SK-N-SH (cell line): ENCODE measurements at regions of chr5 and their contacts with region 1.

Region 1: DNA sequence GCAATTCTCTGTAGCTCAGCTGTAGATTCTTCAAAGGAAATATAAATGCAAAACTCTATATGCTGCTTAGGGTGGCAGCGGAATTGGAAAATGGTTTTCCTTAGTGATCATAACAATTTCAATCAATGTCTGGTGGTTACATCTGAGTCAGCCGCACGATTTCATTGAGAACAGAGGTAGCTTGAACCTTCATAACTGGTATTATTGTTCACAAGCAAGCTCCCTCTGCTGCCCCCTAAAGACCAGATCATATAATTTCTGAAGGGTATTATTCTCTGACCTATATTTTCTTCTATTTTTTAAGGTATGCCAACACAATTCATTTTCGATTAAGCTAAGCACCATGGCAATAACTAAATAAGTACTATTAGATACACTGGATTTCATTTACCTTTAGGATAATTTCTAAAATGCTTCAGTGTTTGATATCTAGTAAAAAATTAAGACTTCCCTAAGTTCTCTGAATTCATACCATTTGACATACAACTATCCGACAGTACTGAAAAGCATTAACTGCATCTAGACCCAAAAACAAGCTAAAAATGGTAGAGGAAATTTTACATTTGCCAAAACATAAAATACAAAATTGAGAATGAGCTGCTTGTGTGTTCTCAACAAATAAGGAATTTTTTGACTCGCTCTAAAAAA is 181.1 kb upstream of the SPEF2 start:
- DNase-seq: peak; percentile 23
- H3K4me3 ChIP-seq: no peak overlapping the region
- H3K27ac ChIP-seq: no peak overlapping the region
- H3K4me1 ChIP-seq: no peaks in the 10 kb centered on the region
- H3K27me3 ChIP-seq: 0 out of 2 replicates have a peak, but pooled peaks cover 6% of the 10 kb centered on the region
- CTCF ChIP-seq: peak; percentile 65
- EP300 ChIP-seq: no peak
- RAD21 ChIP-seq: peak; percentile 52

Region 2: DNA sequence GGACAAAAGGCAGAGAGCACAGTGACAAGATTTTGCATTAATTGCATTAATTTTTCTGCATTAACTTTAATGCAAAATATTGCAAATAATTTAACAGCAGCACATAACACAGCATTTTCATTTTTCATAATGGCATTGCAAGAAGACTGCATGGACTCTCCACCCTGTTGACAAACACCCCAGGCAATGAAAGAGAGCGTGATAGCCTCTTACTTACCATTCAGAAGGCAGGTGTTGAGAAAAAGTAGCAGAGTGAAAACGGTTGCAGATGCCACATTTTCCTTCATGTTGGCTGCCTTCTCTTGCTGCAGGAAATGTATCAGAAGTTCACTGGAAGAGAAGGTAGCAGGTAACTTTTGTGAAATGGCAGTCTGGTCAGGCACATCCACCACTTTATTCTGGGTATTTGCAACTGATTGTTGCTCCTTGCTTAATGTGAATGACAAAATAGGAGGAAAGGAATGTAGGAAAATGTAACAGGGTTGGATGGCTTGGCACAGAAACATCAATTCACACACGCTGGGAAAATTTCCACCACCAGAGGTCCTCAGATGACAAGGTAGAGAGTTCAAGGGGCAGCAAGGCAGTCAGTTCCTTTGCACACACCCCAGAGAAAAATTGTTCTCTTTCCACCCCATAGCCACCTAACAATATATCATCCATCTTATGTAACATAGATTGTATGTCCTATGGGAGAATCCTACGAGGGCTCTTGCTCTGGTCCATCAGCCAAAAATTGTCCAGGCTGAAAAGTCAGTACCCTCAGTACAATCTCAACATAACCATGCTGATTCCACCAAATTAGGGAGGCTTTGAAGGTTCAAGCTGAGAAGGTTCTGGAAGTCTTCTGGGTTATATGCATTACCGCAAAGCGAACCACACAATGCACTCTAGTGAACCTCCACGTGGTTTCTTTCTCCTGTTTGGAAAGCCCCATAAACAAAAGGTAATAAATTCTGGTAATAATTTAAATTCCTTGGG is 346.9 kb before region 1 on chr5:
- CTCF ChIA-PET with region 1: interaction called, 11 read pairs
- POLR2A ChIA-PET with region 1: no interaction called
- DNase-seq: peak; percentile 48
- H3K4me3 ChIP-seq: no peak overlapping the region; a peak in 1 of 4 replicates
- H3K27ac ChIP-seq: no peak overlapping the region
- H3K4me1 ChIP-seq: no peaks in the 10 kb centered on the region
- H3K27me3 ChIP-seq: no peaks in the 10 kb centered on the region; the same call in 1 of the 2 replicates
- CTCF ChIP-seq: peak; percentile 80
- EP300 ChIP-seq: no peak
- RAD21 ChIP-seq: peak; percentile 91

Region 3: DNA sequence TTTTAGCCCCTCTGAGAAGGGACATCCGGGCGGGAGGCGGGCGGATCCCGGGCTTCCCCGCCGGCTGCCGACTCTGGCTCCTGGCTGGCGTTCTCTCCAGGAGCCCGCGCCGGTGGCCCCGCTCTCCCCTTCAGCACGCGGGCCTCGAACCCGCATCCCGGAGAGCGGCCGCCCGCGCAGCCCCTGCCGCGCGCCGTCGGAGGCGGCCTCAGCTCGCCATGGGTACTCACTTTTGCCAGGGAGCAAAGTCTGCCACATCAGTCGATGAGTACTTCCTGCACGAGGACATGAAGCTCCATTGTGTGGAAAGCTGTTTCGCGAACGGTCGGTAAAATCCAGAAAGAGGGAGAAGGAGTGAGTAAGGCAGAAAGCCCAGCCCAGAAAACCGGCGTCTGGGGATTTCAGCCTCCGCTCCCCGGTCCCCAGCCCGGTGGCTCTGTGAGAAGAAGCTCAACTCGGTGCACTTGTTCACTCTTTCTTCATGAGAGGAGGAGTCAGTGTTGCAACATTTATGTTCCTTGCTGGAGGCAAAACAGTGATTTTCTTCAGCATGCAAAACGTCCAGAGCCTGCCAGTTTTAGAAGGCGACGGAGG is 206.4 kb before region 1 on chr5 and contains the start of gene PRLR:
- CTCF ChIA-PET with region 1: interaction called, 23 read pairs
- POLR2A ChIA-PET with region 1: no interaction called
- DNase-seq: peak; percentile 55
- H3K4me3 ChIP-seq: peak within 1 kb of the TSS; percentile 37 to 41; a peak in 3 of 4 replicates
- H3K27ac ChIP-seq: no peak within 1 kb of the TSS
- H3K4me1 ChIP-seq: peaks cover 0 to 9% of the 10 kb centered on the region in 2 experiments; a peak in 1 of 4 replicates
- H3K27me3 ChIP-seq: peaks cover 38% of the 10 kb centered on the region
- CTCF ChIP-seq: no peak
- EP300 ChIP-seq: no peak
- RAD21 ChIP-seq: no peak
- polyA plus RNA-seq, gene PRLR: 0.13 and 0.34 TPM in 2 replicates

Region 4: GRCh38 chr5:35416217-35416988 is 20.1 kb before region 1 on chr5:
- CTCF ChIA-PET with region 1: interaction called, 11 read pairs
- POLR2A ChIA-PET with region 1: no interaction called
- DNase-seq: no peak
- H3K4me3 ChIP-seq: no peak overlapping the region
- H3K27ac ChIP-seq: no peak overlapping the region
- H3K4me1 ChIP-seq: no peaks in the 10 kb centered on the region
- H3K27me3 ChIP-seq: no peaks in the 10 kb centered on the region
- CTCF ChIP-seq: no peak
- EP300 ChIP-seq: no peak
- RAD21 ChIP-seq: no peak